Astrocyte of the spinal cord (primary cell): ENCODE measurements at regions of chr1 and their contacts with region 1.

Region 1: DNA sequence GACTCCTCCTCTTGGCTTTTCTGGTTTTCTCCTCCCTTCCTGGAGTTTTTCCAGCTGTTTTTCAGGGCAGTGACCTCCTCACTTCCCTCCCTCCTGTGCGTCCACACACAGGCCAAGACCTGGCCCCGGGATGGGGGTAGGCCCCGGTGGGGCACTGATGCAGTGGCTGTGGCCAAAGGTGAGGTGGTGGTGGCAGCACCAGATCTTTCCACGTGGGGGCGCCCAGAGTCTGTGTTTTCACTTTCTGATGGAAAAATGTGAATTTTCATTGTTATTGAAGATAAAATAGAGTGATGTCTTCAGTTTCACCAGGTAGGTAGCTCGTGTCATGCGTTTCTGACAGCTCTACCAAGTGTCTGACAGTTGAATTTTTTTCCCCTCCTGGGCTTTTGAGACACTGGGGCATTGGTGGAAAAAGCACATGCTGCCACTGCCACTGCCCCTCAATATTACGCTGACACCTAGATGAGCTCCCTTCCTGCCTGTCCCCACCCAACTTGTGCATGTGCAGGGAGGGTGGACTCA is 39.9 kb upstream of the MAGOH start:
- DNase-seq: no peak
- H3K4me3 ChIP-seq: no peak overlapping the region
- CTCF ChIP-seq: peak; percentile 89

Region 2: GRCh38 chr1:53393325-53393792 is 115.1 kb after region 1 on chr1:
- in situ Hi-C with region 1: loop called (anchors 25 kb)
- DNase-seq: peak; percentile 67
- H3K4me3 ChIP-seq: no peak overlapping the region
- CTCF ChIP-seq: peak; percentile 84